IMR-90 (cell line): ENCODE measurements at regions of chr22 and their contacts with region 1.

Region 1: GRCh38 chr22:42202669-42203068 is 67.8 kb downstream of the TCF20 start:
- DNase-seq: peak; percentile 67
- ATAC-seq: peak; percentile 75; the same call in 1 of the 2 replicates
- H3K4me3 ChIP-seq: no peak overlapping the region
- H3K27ac ChIP-seq: no peak overlapping the region
- H3K4me1 ChIP-seq: no peaks in the 10 kb centered on the region
- H3K27me3 ChIP-seq: no peaks in the 10 kb centered on the region
- CTCF ChIP-seq: no peak
- POLR2A ChIP-seq: no peak
- RAD21 ChIP-seq: no peak

Region 2: GRCh38 chr22:41217553-41218157 is 985.0 kb before region 1 on chr22:
- CTCF ChIA-PET with region 1: no interaction called
- POLR2A ChIA-PET with region 1: no interaction called
- dilution Hi-C with region 1: no loop called
- in situ Hi-C with region 1: no loop called
- intact Hi-C with region 1: no loop called
- DNase-seq: peak; percentile 92
- ATAC-seq: peak; percentile 95
- H3K4me3 ChIP-seq: peak overlapping the region; percentile 11; the same call in 1 of the 2 replicates
- H3K27ac ChIP-seq: peak overlapping the region; percentile 82
- H3K4me1 ChIP-seq: peaks cover 18% of the 10 kb centered on the region
- H3K27me3 ChIP-seq: no peaks in the 10 kb centered on the region
- CTCF ChIP-seq: no peak
- POLR2A ChIP-seq: peak; percentile 58; the same call in 1 of the 2 replicates
- RAD21 ChIP-seq: no peak

Region 3: DNA sequence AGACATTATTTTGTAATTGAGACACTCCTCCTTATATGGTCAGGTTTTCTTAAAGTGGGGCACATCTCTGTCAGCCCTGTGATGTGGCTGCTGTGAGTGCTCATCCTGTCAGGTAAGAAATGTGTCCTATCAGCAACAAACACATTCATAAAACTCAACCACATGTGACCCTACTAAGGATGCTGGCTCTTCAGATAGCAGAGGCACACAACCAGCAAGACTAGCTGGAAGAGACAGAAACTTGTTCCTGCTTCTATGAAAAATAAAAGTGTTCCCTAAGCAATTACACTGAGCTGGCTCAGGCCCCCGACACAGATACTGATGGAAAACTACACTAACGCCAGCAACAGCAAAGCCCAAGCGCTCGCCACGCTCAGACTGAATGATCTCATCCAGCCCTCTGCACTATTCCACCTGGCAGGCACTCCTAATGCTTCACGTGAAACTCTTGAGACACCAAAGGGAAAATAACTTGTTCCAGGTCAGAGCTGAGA is 22.3 kb before region 1 on chr22:
- CTCF ChIA-PET with region 1: no interaction called
- POLR2A ChIA-PET with region 1: no interaction called
- dilution Hi-C with region 1: no loop called
- in situ Hi-C with region 1: no loop called
- intact Hi-C with region 1: loop called (anchors 2 kb)
- DNase-seq: peak; percentile 34
- ATAC-seq: no peak; the same call in 1 of the 2 replicates
- H3K4me3 ChIP-seq: no peak overlapping the region
- H3K27ac ChIP-seq: no peak overlapping the region
- H3K4me1 ChIP-seq: peaks cover 6% of the 10 kb centered on the region
- H3K27me3 ChIP-seq: no peaks in the 10 kb centered on the region
- CTCF ChIP-seq: no peak
- POLR2A ChIP-seq: no peak
- RAD21 ChIP-seq: no peak

Region 4: DNA sequence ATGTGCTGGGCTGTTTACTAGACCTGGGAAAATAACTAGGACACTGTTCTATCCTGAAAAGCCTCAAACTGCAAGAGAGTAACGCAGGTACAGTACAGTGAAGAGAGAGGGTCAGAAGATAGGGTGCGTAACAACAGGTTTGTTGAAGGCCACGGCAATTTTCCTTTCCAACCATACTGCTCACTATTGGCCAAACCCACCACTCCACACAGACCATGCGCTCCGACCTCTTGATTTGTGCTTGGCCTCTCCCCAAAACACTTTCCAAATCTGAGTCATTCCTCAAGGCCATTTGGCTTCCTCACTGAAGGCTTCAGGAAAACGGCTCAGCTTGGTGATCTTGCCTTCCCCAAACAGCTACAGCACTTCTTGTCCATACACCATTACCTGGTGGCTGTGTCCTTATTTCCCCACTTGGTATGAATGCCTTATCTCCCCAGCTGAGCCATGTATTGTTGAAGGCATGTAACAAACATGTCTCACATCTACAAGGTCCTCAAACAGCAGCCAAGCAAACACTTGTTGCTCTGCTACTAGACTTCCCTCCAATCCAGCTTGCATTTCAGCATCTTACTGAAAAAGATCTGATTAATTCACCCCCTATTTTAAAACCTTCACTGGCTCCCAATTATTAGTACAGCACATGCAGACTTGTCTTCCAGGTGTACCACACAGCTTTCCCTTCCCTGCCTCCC is 26.9 kb after region 1 on chr22:
- CTCF ChIA-PET with region 1: no interaction called
- POLR2A ChIA-PET with region 1: no interaction called
- dilution Hi-C with region 1: no loop called
- in situ Hi-C with region 1: no loop called
- intact Hi-C with region 1: loop called (anchors 1 kb)
- DNase-seq: peak; percentile 54
- ATAC-seq: peak; percentile 63
- H3K4me3 ChIP-seq: no peak overlapping the region
- H3K27ac ChIP-seq: no peak overlapping the region
- H3K4me1 ChIP-seq: peaks cover 5% of the 10 kb centered on the region
- H3K27me3 ChIP-seq: no peaks in the 10 kb centered on the region
- CTCF ChIP-seq: no peak
- POLR2A ChIP-seq: no peak
- RAD21 ChIP-seq: no peak

Region 5: DNA sequence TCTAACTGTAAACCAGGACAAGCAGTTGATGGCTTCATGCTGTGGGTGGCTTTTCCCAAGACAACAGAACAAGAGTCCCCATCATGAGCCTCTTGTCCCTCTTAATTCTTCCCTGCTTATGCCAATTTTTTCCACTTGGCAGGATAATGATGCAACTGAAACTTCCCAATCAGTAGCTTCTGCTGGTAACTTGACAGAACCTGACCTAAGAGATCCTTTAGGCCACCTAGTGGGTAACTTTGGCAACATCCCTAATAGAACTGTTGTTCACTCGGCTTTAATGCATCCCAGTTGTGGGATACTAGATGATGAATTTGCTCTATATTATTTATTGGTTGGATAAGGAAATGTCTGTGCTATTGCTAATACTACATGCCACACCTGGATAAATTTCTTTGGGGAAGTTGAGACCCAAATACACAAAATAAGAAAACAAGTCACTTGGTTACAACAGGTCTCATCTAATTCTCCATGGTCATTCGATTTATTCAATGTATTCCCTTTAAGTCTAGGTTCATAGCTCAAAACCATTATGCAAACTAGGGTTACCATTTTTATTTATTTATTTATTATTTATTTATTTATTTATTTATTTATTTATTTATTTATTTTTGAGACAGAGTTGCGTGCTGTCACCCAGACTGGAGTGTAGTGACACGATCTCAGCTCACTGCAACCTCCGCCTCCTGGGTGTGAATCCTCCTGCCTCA is 271.0 kb after region 1 on chr22:
- CTCF ChIA-PET with region 1: no interaction called
- POLR2A ChIA-PET with region 1: no interaction called
- dilution Hi-C with region 1: no loop called
- in situ Hi-C with region 1: no loop called
- intact Hi-C with region 1: no loop called
- DNase-seq: peak; percentile 63
- ATAC-seq: peak; percentile 82
- H3K4me3 ChIP-seq: no peak overlapping the region
- H3K27ac ChIP-seq: no peak overlapping the region
- H3K4me1 ChIP-seq: no peaks in the 10 kb centered on the region
- H3K27me3 ChIP-seq: peaks cover 22% of the 10 kb centered on the region
- CTCF ChIP-seq: peak; percentile 66
- POLR2A ChIP-seq: no peak
- RAD21 ChIP-seq: peak; percentile 59